HEK293 (cell line): ENCODE measurements at regions of chr14 and their contacts with region 1.

Region 1: GRCh38 chr14:74444866-74445265 is 18.9 kb upstream of the SYNDIG1L start:
- H3K4me3 ChIP-seq: no peak overlapping the region
- H3K27ac ChIP-seq: no peak overlapping the region
- H3K4me1 ChIP-seq: no peaks in the 10 kb centered on the region
- CTCF ChIP-seq: no peak

Region 2: DNA sequence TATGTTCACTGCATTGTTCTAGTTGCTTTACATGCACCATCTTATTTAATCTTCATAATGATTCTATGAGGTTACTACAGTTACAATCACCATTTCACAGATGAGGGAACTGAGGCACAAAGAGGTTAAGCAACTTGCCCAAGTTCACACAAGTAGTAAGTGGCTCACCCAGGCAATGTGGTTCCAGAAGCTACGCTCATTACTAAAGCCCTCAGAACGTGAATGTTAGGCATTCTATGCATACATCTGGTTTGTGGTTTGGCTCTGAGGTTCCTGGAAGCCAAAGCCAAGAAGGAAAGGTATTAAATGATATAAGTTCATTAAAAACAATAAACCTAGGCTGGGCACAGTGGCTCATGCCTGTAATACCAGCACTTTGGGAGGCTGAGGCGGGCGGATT is 111.0 kb before region 1 on chr14:
- CTCF ChIA-PET with region 1: no interaction called
- POLR2A ChIA-PET with region 1: no interaction called
- H3K4me3 ChIP-seq: no peak overlapping the region
- H3K27ac ChIP-seq: no peak overlapping the region
- H3K4me1 ChIP-seq: no peaks in the 10 kb centered on the region
- CTCF ChIP-seq: no peak

Region 3: DNA sequence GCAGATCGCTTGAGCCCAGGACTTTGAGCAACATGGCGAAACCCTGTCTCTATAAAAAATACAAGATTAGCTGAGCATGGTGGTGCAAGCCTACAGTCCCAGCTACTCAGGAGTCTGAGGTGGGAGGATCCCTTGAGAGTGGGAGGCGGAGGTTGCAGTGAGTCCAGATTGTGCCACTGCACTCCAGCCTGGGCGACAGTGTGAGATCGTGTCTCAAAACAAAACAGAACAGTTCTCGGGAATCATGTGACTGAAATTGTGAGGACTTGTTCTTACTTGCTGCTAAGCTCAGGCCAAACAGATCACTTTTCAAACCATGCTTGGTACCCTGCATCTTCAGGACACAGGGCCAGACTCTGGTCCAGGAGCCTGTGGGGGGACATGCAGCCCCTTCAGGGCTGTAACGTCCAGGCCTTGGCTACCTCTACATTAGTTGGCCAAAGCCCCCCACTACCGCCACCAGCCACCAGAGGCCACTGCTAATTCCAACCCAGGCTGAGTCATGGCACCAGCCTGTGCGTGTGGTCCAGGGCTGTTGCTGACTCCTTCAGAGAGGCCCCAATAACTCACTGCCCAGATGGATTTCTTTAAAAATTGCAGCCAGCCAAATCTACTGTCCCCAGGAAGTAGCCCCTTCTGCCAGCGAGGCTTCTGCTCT is 14.6 kb after region 1 on chr14:
- CTCF ChIA-PET with region 1: interaction called, 10 read pairs
- POLR2A ChIA-PET with region 1: no interaction called
- H3K4me3 ChIP-seq: no peak overlapping the region
- H3K27ac ChIP-seq: no peak overlapping the region
- H3K4me1 ChIP-seq: no peaks in the 10 kb centered on the region
- CTCF ChIP-seq: peak; percentile 26

Region 4: DNA sequence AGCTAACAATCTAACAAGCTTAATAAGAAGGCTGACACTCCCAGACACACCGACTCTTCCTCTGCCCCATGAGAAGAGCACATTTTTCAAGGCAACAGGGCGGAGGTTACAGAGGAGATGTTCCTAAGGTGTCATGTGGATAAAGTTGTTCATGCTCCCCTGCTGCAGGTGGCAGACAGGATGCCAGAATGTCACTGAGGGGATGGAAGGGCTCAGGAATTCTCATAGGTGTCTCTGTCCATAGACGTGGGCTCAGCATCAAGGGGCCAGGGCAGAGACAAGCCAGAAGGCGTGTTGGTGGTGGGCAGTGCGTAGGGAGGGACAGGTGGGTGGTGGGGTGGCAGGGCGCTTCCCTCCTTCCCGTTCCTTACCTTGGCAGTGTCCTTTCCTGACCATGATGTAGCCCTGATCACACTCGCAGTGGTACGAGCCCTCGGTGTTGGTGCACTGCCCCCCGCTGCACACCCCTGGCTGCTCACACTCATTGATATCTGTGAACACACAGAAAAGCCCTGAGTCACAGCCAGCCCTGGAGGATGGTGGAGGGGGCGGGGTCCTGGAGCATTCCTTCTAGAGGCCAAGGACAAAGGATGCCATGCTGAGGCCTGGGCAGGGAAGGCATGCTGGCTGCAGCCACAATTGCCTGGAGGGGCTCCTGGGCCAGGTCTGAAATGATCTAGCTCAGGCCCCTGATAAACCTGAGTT is 71.7 kb after region 1 on chr14:
- CTCF ChIA-PET with region 1: no interaction called
- POLR2A ChIA-PET with region 1: no interaction called
- H3K4me3 ChIP-seq: no peak overlapping the region
- H3K27ac ChIP-seq: no peak overlapping the region
- H3K4me1 ChIP-seq: no peaks in the 10 kb centered on the region
- CTCF ChIP-seq: no peak

Region 5: GRCh38 chr14:74647678-74648461 is 203.0 kb after region 1 on chr14:
- CTCF ChIA-PET with region 1: no interaction called
- POLR2A ChIA-PET with region 1: no interaction called
- H3K4me3 ChIP-seq: no peak overlapping the region
- H3K27ac ChIP-seq: peak overlapping the region; percentile 34; the same call in 1 of the 2 replicates
- H3K4me1 ChIP-seq: peaks cover 12% of the 10 kb centered on the region
- CTCF ChIP-seq: no peak